ENCODE measurements at regions of chr19 and their contacts with region 1.

Region 1: GRCh38 chr19:32674959-32675719 is at the start of gene ANKRD27:
- DNase-seq: peak; percentile 94 to 99
- H3K4me3 ChIP-seq: peak within 1 kb of the TSS; percentile 93 to 98
- H3K27ac ChIP-seq: peak within 1 kb of the TSS; percentile 61 to 72
- H3K4me1 ChIP-seq: peaks cover 10 to 18% of the 10 kb centered on the region in 2 donors
- H3K27me3 ChIP-seq: peaks cover 10% of the 10 kb centered on the region
- CTCF ChIP-seq: no peak
- total RNA-seq, gene ANKRD27: 17.3 TPM

Region 2: DNA sequence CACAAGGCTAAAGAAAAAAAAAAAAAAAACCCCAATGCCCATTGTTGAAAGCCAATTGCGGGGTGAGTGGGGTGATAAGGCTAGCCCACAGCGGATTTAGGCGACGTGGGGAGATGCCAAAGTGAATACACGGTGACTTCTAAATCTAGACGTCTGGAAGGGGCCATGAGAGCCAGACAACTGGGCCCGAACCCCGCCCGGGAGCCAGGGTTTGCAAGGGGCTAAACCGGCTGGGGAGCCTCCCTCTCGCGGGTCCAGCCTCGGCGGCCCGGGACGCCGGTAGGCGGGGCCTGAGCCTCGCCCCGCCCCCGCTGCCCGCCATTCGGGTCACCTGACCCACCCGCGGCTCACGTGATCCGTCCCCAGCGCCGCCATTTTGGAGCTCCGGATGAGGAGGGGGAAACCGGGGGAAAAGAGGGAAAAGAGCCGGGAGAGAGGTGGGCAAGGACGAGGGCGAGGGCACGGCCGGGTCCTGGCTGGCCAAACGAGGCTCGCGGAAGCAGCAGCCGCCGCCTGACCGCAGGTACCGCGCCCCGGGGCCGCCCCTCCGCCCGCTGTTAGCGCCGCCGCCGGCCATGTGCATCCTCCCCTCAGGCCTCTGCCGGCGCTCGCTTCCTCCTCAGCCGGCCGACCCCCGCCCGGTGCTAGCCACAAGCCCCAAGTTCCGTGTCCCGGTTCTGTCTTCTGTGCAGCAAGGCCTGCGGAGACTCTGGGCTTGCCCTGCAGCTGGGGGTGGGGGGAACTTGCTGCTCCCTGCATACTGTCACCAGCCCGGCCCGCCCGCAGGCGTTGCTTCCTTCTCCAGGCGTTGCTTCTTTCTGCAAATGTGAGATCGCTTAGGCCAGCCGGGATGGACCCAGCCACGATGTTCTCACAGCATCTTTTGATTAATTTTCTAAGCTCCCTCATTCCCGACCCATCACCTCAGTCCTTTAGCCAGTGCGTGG is 329.6 kb before region 1 on chr19 and contains the start of gene ZNF507:
- intact Hi-C with region 1: loop called (anchors 5 kb)
- DNase-seq: peak in 1 of 2 donors; percentile 86
- H3K4me3 ChIP-seq: peak within 1 kb of the TSS; percentile 67 to 94
- H3K27ac ChIP-seq: peak within 1 kb of the TSS; percentile 51 to 73
- H3K4me1 ChIP-seq: peaks cover 3 to 22% of the 10 kb centered on the region in 2 donors
- H3K27me3 ChIP-seq: no peaks in the 10 kb centered on the region
- CTCF ChIP-seq: peak in 1 of 3 experiments; percentile 10
- total RNA-seq, gene ZNF507: 6.4 TPM

Region 3: DNA sequence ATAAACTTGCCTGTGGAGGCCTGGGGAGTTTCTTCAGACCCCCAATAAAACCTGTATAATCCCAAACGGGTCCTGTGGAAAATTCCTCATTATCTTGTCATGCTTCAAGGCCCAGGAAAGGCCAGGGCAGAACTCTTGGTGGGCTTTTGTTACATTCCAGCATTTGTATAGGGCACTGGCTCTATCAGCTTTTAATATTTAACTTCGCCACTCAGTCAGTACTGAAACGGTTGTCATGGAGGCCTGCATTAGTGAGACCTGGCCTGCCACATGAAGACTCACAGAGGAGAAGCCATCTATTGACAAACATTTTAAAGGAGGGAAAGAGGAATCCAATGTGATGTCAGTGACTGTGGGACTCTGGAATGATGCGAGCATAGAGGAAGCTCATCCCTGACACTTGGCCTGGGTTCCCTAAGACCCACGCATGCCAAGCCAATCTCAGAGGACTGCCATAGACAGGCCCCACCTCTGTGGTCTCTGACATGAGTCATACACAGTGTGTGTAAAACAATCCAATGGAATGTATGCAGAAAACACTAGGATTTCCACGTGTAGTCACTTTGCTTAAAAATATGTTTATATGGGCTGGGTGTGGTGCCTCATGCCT is 277.5 kb before region 1 on chr19:
- intact Hi-C with region 1: no loop called
- DNase-seq: no peak
- H3K4me3 ChIP-seq: no peak overlapping the region
- H3K27ac ChIP-seq: no peak overlapping the region
- H3K4me1 ChIP-seq: no peaks in the 10 kb centered on the region
- H3K27me3 ChIP-seq: no peaks in the 10 kb centered on the region
- CTCF ChIP-seq: no peak

Region 4: DNA sequence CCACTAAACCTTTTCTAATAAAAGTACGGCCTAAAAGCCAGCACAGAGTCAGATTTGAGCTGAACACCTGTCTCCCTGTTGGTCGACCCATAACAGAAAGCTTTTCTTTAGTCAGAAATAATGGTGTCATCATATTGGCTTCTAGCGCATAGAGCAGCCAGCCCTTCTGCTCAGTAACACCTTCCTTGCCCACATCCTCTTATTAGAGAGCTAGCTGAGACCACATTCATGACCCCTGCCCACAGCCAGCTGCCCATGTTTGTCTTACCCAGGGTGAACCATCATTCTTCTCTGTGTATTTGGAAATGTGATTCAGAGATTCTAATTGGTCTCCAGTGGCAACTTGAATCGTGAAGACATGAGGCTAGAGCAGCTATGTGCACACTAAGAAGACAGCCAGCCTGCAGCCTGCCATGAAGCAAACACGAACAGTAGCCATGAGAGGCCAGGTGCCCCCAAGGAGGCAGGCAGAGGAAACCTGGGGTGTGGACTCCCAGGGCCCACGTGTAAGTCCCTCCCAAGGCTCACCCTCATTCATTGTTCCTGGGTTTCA is 176.4 kb before region 1 on chr19:
- intact Hi-C with region 1: no loop called
- DNase-seq: no peak
- H3K4me3 ChIP-seq: no peak overlapping the region
- H3K27ac ChIP-seq: no peak overlapping the region
- H3K4me1 ChIP-seq: no peaks in the 10 kb centered on the region
- H3K27me3 ChIP-seq: no peaks in the 10 kb centered on the region
- CTCF ChIP-seq: no peak

Region 5: DNA sequence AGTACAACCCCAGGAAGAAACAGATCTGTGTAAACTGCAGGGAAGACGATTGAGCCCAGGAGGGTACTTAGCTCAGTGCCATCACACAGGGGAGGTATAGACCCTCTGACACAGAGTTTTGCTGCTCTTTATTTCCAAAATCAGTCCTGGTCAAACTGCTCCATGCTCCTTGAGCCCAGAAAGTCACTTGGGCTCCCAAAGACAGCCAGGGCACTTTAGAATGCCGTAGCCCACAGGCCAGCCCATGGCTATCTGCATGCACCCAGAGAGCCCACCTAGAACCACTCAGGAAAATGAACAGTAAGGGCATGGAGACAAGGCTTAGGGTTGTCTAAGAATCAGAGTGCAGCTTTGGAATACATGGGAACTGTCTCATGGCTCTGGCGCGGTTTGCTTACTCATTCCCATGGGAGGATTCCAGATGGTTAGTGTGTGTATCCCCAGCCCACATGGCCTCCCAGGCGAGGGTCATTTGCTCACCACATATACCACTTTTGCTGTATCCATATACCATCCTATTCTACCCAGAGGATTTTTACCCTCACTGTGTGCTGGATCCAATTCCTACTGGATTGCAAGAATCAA is 108.8 kb before region 1 on chr19:
- intact Hi-C with region 1: no loop called
- DNase-seq: no peak
- H3K4me3 ChIP-seq: no peak overlapping the region
- H3K27ac ChIP-seq: no peak overlapping the region
- H3K4me1 ChIP-seq: no peaks in the 10 kb centered on the region
- H3K27me3 ChIP-seq: no peaks in the 10 kb centered on the region
- CTCF ChIP-seq: no peak

Region 6: DNA sequence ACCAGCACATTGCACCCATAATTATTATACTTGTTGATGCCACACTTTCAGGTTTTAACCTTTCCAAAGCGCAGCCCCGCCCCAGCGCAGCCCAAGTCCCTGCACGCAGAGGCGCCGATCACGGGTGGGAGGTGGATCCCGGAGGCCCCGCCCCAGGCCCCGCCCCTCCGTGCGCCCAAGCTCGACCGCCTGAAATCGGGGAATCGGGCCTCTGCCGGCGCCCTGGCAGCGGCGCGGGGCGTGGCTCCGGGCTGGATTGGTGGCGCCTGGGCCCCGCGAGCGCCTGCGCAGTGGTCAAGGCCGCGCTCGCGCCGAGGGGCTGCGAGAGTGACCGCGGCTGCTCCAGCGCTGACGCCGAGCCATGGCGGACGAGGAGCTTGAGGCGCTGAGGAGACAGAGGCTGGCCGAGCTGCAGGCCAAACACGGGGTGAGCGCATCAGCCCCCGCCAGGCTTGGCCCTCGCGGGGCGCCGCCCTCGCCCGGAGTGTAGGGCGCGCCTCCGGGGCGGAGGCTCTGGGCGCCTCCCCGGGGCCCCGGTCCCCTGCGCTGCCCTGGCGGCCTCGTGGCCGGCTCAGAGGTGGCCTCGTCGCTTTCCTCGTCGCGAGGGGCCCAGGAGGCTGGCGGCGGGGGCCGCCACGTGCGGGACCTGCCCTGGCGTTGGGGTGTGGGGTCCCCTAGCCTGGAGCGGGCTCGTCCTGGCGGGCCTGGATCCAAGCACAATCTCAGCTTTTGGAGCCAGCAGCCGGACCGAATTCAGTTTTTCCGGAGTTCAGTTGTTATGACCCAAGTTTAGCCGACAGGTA is 94.0 kb before region 1 on chr19 and contains the start of gene PDCD5:
- intact Hi-C with region 1: loop called (anchors 1 kb)
- DNase-seq: peak; percentile 86 to 98
- H3K4me3 ChIP-seq: peak within 1 kb of the TSS; percentile 86 to 88
- H3K27ac ChIP-seq: peak within 1 kb of the TSS; percentile 76 to 81
- H3K4me1 ChIP-seq: peaks cover 0 to 5% of the 10 kb centered on the region in 2 donors
- H3K27me3 ChIP-seq: no peaks in the 10 kb centered on the region
- CTCF ChIP-seq: no peak
- total RNA-seq, gene PDCD5: 36.6 TPM

Region 7: GRCh38 chr19:32691291-32691951 is 16.3 kb after region 1 on chr19 and contains the start of gene NUDT19:
- intact Hi-C with region 1: loop called (anchors 1 kb)
- DNase-seq: peak; percentile 51 to 91
- H3K4me3 ChIP-seq: peak within 1 kb of the TSS; percentile 82 to 95
- H3K27ac ChIP-seq: peak within 1 kb of the TSS; percentile 61 to 86
- H3K4me1 ChIP-seq: peaks cover 10 to 15% of the 10 kb centered on the region in 2 donors
- H3K27me3 ChIP-seq: no peaks in the 10 kb centered on the region
- CTCF ChIP-seq: no peak
- total RNA-seq, gene NUDT19: 6.2 TPM

Region 8: DNA sequence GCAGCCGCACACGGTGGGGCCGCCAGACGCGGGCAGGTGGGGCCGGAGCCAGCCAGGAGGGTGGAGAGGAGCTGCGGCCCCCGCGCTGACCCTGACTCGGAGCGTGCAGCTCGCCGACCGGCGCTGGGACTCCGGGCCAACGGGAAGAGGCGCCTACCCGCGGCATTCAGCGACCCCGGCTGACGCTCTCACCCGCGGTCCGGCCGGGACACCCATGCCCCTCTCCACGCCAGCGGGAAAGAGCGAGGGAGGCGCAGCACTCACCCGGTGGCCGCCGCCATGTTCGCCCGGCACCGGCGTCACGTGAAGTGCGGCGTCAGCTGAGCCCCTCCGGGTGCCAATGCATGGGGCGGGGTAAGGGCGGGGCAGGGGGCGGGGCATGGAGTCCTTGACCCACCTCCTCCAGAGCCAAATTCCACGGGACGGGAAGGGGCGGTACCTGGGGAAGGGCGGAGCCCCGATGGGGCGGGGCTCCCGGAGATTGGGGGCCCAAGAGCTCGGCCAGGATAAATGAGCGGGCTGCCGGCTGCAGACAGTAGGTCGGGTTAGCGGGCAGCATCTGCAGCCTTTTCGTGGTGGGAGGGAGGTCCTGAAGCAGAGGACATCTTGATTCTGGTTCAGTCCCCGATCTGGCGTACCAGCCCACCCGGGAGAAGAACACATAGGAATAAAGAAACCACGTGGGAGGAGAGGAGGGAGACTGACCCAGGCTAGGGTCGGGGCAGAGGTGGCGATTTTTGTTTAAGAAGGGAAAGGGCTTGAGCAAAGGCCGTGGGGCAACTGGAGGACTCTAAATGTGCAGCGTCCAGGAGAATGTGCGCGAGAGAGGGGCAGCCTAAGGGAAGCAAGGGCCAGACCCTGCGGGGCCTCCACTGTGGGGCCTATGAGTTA is 846.6 kb after region 1 on chr19 and contains the start of gene PEPD:
- intact Hi-C with region 1: loop called (anchors 10 kb)
- DNase-seq: peak; percentile 60 to 95
- H3K4me3 ChIP-seq: peak within 1 kb of the TSS; percentile 60 to 89
- H3K27ac ChIP-seq: peak within 1 kb of the TSS in 1 of 2 donors; percentile 4
- H3K4me1 ChIP-seq: peaks cover 4 to 7% of the 10 kb centered on the region in 2 donors
- H3K27me3 ChIP-seq: no peaks in the 10 kb centered on the region
- CTCF ChIP-seq: no peak
- total RNA-seq, gene PEPD: 112 TPM

Measured in ascending aorta (tissue), 2 donors.